Heart right ventricle (tissue), 16 donors: ENCODE measurements at regions of chr2 and their contacts with region 1.

Region 1: DNA sequence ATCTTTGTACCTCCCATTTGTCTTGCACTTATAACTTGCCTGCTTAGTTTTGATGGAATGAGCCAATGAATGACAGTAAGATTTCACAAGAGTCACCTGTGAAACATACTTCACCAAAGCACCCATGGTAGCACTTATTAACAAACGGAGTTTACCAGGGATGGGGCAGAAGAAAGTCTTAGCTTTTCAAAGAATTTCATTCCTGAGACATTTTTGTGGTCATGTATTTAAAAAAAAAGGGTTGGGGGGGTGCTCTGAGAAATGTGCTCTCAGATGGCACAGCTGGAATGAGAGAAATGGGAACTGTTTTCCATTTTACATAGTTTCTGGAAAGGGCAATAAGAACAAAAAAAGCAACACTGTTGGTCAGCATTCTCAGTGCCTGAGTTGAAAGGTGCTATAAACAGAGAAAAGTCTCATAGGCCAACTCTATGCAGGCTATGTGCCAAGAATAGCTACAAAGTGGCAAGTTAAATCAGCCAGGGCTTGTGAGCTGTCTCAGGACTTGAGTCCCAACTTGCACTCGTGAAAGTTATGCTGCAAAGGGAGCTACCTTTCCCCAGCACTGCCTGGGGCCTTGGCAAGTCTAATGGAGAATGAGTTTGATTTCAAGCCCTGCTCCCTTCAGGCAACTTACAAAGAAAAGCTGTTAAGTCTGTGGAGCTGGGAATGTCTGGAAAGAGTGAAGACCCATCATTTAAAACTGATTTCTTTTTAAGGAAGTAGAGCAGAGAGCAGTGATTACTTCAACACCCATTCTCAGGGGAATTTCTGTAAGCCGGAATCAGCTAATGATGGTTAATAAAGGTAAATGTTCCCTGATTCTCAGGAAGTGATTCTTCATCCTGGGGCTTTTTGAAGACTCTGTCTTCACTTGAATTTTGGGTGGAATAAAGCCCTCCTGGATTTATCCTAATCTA is 170.6 kb downstream of the SLC8A1 start:
- DNase-seq: peak in 1 of 2 donors; percentile 58
- ATAC-seq: peak; percentile 51 to 84 (median 79)
- H3K4me3 ChIP-seq: peak overlapping the region in 2 of 10 donors; percentile 28 to 30
- H3K27ac ChIP-seq: peak overlapping the region in 9 of 10 donors; percentile 16 to 77 (median 66)
- H3K4me1 ChIP-seq: peaks cover 14 to 93% (median 68%) of the 10 kb centered on the region in 9 donors
- H3K27me3 ChIP-seq: no peaks in the 10 kb centered on the region
- CTCF ChIP-seq: no peak

Region 2: GRCh38 chr2:40244675-40245074 is 36.6 kb before region 1 on chr2:
- intact Hi-C with region 1: loop called in 1 of 10 experiments (anchors 2 kb)
- DNase-seq: peak; percentile 27 to 65
- ATAC-seq: peak; percentile 42 to 81 (median 66)
- H3K4me3 ChIP-seq: no peak overlapping the region
- H3K27ac ChIP-seq: peak overlapping the region in 8 of 10 donors; percentile 17 to 82 (median 56)
- H3K4me1 ChIP-seq: peaks cover 13 to 91% (median 44%) of the 10 kb centered on the region in 9 donors
- H3K27me3 ChIP-seq: no peaks in the 10 kb centered on the region
- CTCF ChIP-seq: peak in 8 of 9 donors; percentile 19 to 74 (median 58)